RWPE1 (cell line): ENCODE measurements at regions of chr9 and their contacts with region 1.

Region 1: GRCh38 chr9:33778700-33779351 is 16.5 kb upstream of the PRSS3 start:
- DNase-seq: peak; percentile 71
- H3K27ac ChIP-seq: peak overlapping the region; percentile 91
- CTCF ChIP-seq: peak; percentile 98

Region 2: GRCh38 chr9:33737811-33738606 is 40.8 kb before region 1 on chr9:
- CTCF ChIA-PET with region 1: interaction called, 15 read pairs
- POLR2A ChIA-PET with region 1: interaction called, 7 read pairs
- DNase-seq: peak; percentile 57
- H3K27ac ChIP-seq: no peak overlapping the region
- CTCF ChIP-seq: peak; percentile 94

Region 3: DNA sequence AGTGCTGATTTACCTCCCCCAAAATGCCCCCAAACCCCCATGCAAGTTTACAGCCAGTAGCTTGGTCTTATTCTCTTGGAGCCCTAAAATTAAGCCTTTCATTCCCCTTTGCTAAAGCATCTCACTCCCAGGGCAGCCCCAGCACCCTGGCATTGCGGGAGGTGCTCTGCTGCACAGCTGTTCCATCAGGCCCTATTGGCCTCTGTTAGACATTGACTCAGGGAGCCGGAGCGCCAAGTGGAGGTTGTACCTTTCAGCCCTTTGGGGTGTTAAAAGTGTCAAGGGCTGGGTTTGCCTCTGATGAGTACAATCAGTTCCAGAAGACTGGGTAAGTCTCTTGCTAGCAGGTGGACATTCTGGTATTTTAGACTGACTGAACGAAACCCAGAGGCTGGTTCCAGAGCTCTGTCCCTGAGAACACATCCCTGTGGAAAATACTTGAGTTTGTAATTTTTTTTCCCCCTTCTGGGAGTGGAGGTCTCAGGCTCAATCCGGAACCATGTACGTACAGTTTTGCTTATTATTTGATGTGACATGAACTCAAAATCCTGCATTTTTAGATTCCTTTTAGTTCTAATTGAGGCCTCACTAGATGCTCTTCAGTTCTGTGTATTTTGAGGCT is 140.6 kb after region 1 on chr9:
- CTCF ChIA-PET with region 1: no interaction called
- POLR2A ChIA-PET with region 1: no interaction called
- DNase-seq: no peak
- H3K27ac ChIP-seq: peak overlapping the region; percentile 39
- CTCF ChIP-seq: no peak